A549 (cell line): ENCODE measurements at regions of chr15 and their contacts with region 1.

Region 1: GRCh38 chr15:90086868-90087268 is 15.4 kb downstream of the IDH2 start:
- DNase-seq: peak; percentile 68 to 79
- ATAC-seq: peak; percentile 74 to 84; a peak in 5 of 6 replicates
- H3K4me3 ChIP-seq: no peak overlapping the region
- H3K27ac ChIP-seq: 0 out of 6 replicates have a peak overlapping the region, but pooled peaks of 1 of the 2 experiments have one; percentile 13
- H3K4me1 ChIP-seq: peaks cover 7% of the 10 kb centered on the region; the same call in 1 of the 3 replicates
- CTCF ChIP-seq: peak; percentile 79
- EP300 ChIP-seq: no peak
- POLR2A ChIP-seq: no peak
- RAD21 ChIP-seq: peak; percentile 79 to 94

Region 2: DNA sequence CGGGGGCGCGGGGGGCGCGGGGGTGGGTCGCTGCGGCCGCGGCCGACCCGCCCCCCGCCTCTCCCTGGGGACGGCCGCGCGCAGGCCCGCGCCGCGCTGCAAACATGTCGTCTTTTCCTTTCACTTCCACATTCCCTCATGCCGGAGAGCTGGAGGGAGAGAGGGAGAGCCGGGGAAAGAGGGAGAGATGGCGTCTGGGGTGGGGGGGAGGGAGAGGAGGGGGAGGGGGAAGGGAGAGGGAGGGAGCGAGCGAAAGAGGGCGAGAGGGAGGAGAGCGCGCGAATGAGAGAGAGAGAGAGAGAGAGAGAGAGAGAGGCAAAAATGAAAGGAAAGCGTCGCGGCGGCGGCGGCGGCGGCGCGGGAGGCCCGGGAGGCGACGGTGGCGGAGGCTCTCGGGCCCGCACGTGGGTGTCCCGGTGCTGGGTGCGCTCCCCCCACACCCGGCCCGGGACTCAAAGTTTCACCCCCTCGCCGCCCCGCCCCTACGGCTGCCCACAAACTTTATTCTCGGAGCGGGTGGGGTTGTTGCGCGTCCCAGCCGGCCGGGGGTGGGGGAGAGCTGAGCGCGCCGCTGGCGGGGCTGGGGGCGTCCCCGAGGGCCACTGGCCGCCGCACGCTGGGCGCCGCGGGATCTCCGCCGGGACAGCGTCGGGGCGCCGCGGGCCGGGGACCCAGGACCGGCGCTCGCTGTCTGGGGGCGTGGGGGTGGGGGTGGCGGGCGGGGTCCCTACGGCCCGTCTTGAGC is 85.0 kb before region 1 on chr15:
- CTCF ChIA-PET with region 1: interaction called, 3 read pairs
- POLR2A ChIA-PET with region 1: interaction called, 16 read pairs
- DNase-seq: peak; percentile 67 to 75
- ATAC-seq: peak; percentile 11 to 37
- H3K4me3 ChIP-seq: peak overlapping the region; percentile 85
- H3K27ac ChIP-seq: peak overlapping the region; percentile 93 to 97
- H3K4me1 ChIP-seq: peaks cover 66% of the 10 kb centered on the region
- CTCF ChIP-seq: no peak
- EP300 ChIP-seq: no peak
- POLR2A ChIP-seq: no peak
- RAD21 ChIP-seq: no peak

Region 3: GRCh38 chr15:90101969-90102890 is 15.4 kb after region 1 on chr15 and contains the start of gene IDH2:
- CTCF ChIA-PET with region 1: interaction called, 94 read pairs
- POLR2A ChIA-PET with region 1: interaction called, 7 read pairs
- DNase-seq: peak; percentile 78 to 92
- ATAC-seq: peak; percentile 91 to 95
- H3K4me3 ChIP-seq: peak within 1 kb of the TSS; percentile 87
- H3K27ac ChIP-seq: peak within 1 kb of the TSS; percentile 86 to 92
- H3K4me1 ChIP-seq: peaks cover 33% of the 10 kb centered on the region
- CTCF ChIP-seq: 0 out of 3 replicates have a peak, but pooled peaks have one; percentile 8
- EP300 ChIP-seq: no peak
- POLR2A ChIP-seq: peak; percentile 97
- RAD21 ChIP-seq: no peak
- polyA plus RNA-seq, gene IDH2: 31.8 and 37.7 TPM in 2 replicates